B cell (primary cell): ENCODE measurements at regions of chr11 and their contacts with region 1.

Region 1: GRCh38 chr11:7353100-7353499 is 101.4 kb downstream of the SYT9 start:
- DNase-seq: peak; percentile 50
- ATAC-seq: peak; percentile 53
- H3K4me3 ChIP-seq: no peak overlapping the region
- H3K4me3 Mint-ChIP-seq: no peak overlapping the region
- H3K27ac ChIP-seq: no peak overlapping the region
- H3K27ac Mint-ChIP-seq: no peak overlapping the region
- H3K4me1 ChIP-seq: peaks cover 0 to 3% of the 10 kb centered on the region in 2 donors
- H3K4me1 Mint-ChIP-seq: peaks cover 2% of the 10 kb centered on the region
- H3K27me3 ChIP-seq: peaks cover 0 to 4% (median under 1%) of the 10 kb centered on the region in 4 experiments
- H3K27me3 Mint-ChIP-seq: peaks cover 11% of the 10 kb centered on the region
- CTCF ChIP-seq: peak; percentile 63

Region 2: GRCh38 chr11:7436657-7437056 is 83.6 kb after region 1 on chr11:
- CTCF ChIA-PET with region 1: interaction called, 104 read pairs
- POLR2A ChIA-PET with region 1: no interaction called
- intact Hi-C with region 1: no loop called
- DNase-seq: peak; percentile 65
- ATAC-seq: peak; percentile 96
- H3K4me3 ChIP-seq: no peak overlapping the region
- H3K4me3 Mint-ChIP-seq: peak overlapping the region; percentile 61
- H3K27ac ChIP-seq: peak overlapping the region; percentile 28 to 66
- H3K27ac Mint-ChIP-seq: peak overlapping the region; percentile 86
- H3K4me1 ChIP-seq: peaks cover 16 to 18% of the 10 kb centered on the region in 2 donors
- H3K4me1 Mint-ChIP-seq: peaks cover 20% of the 10 kb centered on the region
- H3K27me3 ChIP-seq: no peaks in the 10 kb centered on the region
- H3K27me3 Mint-ChIP-seq: no peaks in the 10 kb centered on the region
- CTCF ChIP-seq: no peak

Region 3: DNA sequence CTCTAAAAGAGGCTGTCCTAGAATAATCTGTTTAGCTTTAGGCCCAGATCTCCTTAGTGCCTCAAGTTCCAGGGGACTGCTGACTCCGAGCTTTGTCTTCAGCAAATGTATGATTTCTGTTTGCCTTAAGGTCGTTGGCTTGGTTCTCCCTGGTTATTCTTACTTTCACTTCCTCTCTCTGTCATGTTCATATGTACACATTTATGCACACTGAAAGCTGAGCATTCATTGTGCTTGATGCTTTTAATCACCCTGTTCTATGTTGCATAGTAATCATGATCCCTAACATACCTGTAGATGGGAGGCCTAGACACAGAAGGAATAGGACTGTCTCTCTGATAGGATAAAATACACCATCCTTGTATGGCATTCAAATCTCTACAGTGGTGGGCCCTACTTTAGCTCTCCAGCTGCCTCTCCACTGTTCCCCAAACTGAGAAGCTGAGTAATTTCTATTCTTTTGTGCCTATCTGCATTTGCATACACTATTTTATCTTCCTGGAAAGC is 167.9 kb after region 1 on chr11:
- CTCF ChIA-PET with region 1: no interaction called
- POLR2A ChIA-PET with region 1: no interaction called
- intact Hi-C with region 1: loop called (anchors 10 kb)
- DNase-seq: peak; percentile 79
- ATAC-seq: peak; percentile 57
- H3K4me3 ChIP-seq: peak overlapping the region in 1 of 5 experiments; percentile 12
- H3K4me3 Mint-ChIP-seq: no peak overlapping the region
- H3K27ac ChIP-seq: peak overlapping the region; percentile 85 to 87
- H3K27ac Mint-ChIP-seq: no peak overlapping the region
- H3K4me1 ChIP-seq: peaks cover 67 to 90% of the 10 kb centered on the region in 2 donors
- H3K4me1 Mint-ChIP-seq: peaks cover 4% of the 10 kb centered on the region
- H3K27me3 ChIP-seq: no peaks in the 10 kb centered on the region
- H3K27me3 Mint-ChIP-seq: no peaks in the 10 kb centered on the region
- CTCF ChIP-seq: no peak

Region 4: GRCh38 chr11:7657306-7658025 is 304.4 kb after region 1 on chr11:
- CTCF ChIA-PET with region 1: interaction called, 27 read pairs
- POLR2A ChIA-PET with region 1: no interaction called
- intact Hi-C with region 1: loop called (anchors 2 kb)
- DNase-seq: peak; percentile 41
- ATAC-seq: peak; percentile 39
- H3K4me3 ChIP-seq: no peak overlapping the region
- H3K4me3 Mint-ChIP-seq: no peak overlapping the region
- H3K27ac ChIP-seq: no peak overlapping the region
- H3K27ac Mint-ChIP-seq: no peak overlapping the region
- H3K4me1 ChIP-seq: no peaks in the 10 kb centered on the region
- H3K4me1 Mint-ChIP-seq: no peaks in the 10 kb centered on the region
- H3K27me3 ChIP-seq: no peaks in the 10 kb centered on the region
- H3K27me3 Mint-ChIP-seq: no peaks in the 10 kb centered on the region
- CTCF ChIP-seq: no peak

Region 5: GRCh38 chr11:7688238-7688826 is 335.2 kb after region 1 on chr11:
- CTCF ChIA-PET with region 1: interaction called, 19 read pairs
- POLR2A ChIA-PET with region 1: no interaction called
- intact Hi-C with region 1: loop called (anchors 2 kb)
- DNase-seq: peak; percentile 48
- ATAC-seq: peak; percentile 54
- H3K4me3 ChIP-seq: no peak overlapping the region
- H3K4me3 Mint-ChIP-seq: no peak overlapping the region
- H3K27ac ChIP-seq: no peak overlapping the region
- H3K27ac Mint-ChIP-seq: no peak overlapping the region
- H3K4me1 ChIP-seq: no peaks in the 10 kb centered on the region
- H3K4me1 Mint-ChIP-seq: no peaks in the 10 kb centered on the region
- H3K27me3 ChIP-seq: peaks cover 0 to 5% (median 3%) of the 10 kb centered on the region in 4 experiments
- H3K27me3 Mint-ChIP-seq: peaks cover 31% of the 10 kb centered on the region
- CTCF ChIP-seq: peak; percentile 90